Activated B cell treated with CpG ODN at 0.5 μM for 24 hours (primary cell): ENCODE measurements at regions of chr11 and their contacts with region 1.

Region 1: DNA sequence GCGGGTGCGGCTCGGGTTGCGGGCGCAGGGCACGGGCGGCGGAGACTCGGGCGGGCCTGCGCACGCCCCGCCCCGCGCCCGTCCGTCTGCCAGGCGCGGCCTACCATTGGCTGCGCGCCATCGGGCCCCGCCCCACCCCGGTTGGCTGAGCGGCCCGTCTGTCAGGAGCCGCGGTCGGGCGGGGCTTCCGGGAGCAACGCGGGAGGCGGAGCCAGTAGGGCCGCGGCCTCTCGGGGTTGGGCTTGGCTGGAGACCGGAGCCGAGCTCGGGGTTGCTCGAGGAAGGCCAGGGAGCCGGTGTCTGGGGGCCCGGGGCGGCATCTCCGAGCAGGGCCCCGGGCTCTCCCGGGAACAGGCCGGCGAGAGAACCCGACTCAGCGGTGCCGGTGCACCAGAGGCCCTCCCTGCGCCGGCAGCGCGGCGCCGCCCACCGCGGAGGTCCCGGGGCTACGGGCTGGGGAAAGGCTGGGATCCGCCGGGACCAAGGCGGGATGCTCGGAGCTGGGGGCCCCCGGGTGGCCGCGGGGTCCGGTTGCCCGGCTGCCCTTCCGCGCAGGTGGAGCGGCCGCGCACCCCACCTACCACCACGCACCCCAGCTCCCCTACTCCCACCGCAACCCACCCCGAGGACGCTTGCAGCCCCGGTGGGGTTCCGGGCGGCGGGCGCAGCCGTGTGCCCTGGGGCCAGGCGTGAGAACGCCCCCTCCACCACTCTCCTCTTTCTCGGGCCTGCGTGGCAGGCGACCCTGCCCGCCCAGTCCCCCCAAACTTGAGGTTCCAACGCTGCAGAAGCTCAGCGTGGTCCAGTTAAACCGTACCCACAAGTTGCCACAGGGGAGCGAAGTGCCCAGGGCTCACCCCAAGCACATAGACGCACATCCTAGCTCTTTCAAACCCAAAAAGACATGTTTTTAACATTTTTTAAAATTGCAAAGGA is at the start of gene HRAS:
- DNase-seq: peak; percentile 98
- ATAC-seq: peak; percentile 78
- H3K4me3 Mint-ChIP-seq: peak within 1 kb of the TSS; percentile 90
- H3K27ac Mint-ChIP-seq: peak within 1 kb of the TSS; percentile 96
- H3K4me1 Mint-ChIP-seq: peaks cover 26% of the 10 kb centered on the region
- H3K27me3 Mint-ChIP-seq: no peaks in the 10 kb centered on the region
- CTCF ChIP-seq: no peak
- total RNA-seq, gene HRAS: 37.2 and 43.9 TPM in 2 replicates

Region 2: DNA sequence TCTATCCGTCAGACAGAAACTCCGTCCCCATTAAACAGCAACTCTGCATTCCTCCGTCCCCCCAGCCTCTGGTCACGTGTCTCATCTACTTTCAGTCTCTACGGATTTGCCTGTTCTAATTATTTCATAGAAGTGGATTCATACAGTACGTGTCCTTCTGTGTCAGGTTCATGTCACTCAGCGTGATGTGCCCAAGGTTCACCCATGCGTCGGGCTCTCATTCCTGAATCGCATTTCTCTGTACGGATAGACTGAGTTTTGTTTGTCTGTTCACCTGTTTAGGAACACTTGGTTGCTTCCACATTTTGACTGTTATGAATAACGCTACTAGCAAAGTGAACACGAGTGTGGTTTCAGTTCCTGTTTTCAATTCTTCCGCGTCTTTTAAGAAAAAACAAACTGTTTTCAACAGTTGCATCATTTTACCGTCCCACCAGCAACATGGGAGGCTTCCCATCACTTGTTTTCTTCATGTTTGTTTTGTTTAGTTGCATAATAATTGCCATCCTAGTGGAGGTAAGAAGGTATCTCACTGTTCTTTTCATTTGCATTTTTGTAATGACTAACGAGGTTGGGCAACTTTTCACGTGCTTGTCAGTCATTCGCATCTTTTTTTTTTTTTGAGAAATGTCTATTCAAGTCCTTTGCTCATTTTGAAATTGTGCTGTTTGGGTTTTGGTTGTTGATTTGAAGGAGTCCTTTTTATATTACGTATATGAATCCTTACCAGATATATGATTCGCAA is 266.5 kb before region 1 on chr11:
- CTCF ChIA-PET with region 1: no interaction called
- POLR2A ChIA-PET with region 1: no interaction called
- intact Hi-C with region 1: loop called (anchors 2 kb)
- DNase-seq: peak; percentile 54
- ATAC-seq: peak; percentile 71
- H3K4me3 Mint-ChIP-seq: peak overlapping the region; percentile 90
- H3K27ac Mint-ChIP-seq: peak overlapping the region; percentile 99
- H3K4me1 Mint-ChIP-seq: peaks cover 40% of the 10 kb centered on the region
- H3K27me3 Mint-ChIP-seq: no peaks in the 10 kb centered on the region
- CTCF ChIP-seq: no peak

Region 3: DNA sequence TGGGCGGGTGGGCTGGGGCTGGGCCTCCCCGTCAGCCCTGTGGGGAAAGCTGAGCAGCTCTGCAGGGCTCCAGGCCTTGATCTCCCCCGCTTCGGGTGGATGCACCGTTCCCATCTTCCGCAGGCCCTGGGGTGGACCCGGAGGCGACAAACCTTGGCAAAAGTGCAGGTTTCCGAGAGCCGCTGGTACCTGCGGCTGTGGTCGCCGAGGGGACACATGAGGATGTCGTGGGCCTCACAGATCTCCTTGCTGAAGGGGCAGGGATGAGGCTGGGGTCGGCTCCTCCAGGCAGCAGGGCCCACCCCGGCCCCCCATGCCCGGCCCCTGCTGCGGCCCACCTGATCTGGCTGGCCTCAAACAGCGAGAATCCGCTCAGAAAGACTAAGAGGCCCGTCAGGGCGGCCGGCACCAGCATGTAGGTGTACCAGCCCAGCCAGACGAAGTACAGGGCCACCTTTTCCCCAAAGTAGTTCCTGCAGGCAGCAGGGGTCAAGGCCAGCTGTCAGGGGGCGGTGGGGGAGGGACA is 105.8 kb before region 1 on chr11:
- CTCF ChIA-PET with region 1: no interaction called
- POLR2A ChIA-PET with region 1: no interaction called
- intact Hi-C with region 1: no loop called
- DNase-seq: no peak
- ATAC-seq: no peak
- H3K4me3 Mint-ChIP-seq: no peak overlapping the region
- H3K27ac Mint-ChIP-seq: no peak overlapping the region
- H3K4me1 Mint-ChIP-seq: no peaks in the 10 kb centered on the region
- H3K27me3 Mint-ChIP-seq: no peaks in the 10 kb centered on the region
- CTCF ChIP-seq: no peak

Region 4: GRCh38 chr11:506238-506994 is 29.4 kb before region 1 on chr11:
- CTCF ChIA-PET with region 1: no interaction called
- POLR2A ChIA-PET with region 1: interaction called, 45 read pairs
- intact Hi-C with region 1: loop called (anchors 1 kb)
- DNase-seq: peak; percentile 98
- ATAC-seq: peak; percentile 70
- H3K4me3 Mint-ChIP-seq: peak overlapping the region; percentile 97
- H3K27ac Mint-ChIP-seq: peak overlapping the region; percentile 99
- H3K4me1 Mint-ChIP-seq: peaks cover 41% of the 10 kb centered on the region
- H3K27me3 Mint-ChIP-seq: no peaks in the 10 kb centered on the region
- CTCF ChIP-seq: no peak

Region 5: GRCh38 chr11:560305-561147 is 24.7 kb after region 1 on chr11 and contains the starts of genes LMNTD2 and RASSF7:
- CTCF ChIA-PET with region 1: no interaction called
- POLR2A ChIA-PET with region 1: interaction called, 22 read pairs
- intact Hi-C with region 1: loop called (anchors 1 kb)
- DNase-seq: peak; percentile 97
- ATAC-seq: peak; percentile 96
- H3K4me3 Mint-ChIP-seq: peak within 1 kb of the TSS; percentile 84
- H3K27ac Mint-ChIP-seq: peak within 1 kb of the TSS; percentile 59
- H3K4me1 Mint-ChIP-seq: peaks cover 17% of the 10 kb centered on the region
- H3K27me3 Mint-ChIP-seq: no peaks in the 10 kb centered on the region
- CTCF ChIP-seq: no peak
- total RNA-seq, gene LMNTD2: 8.6 and 9.1 TPM in 2 replicates
- total RNA-seq, gene RASSF7: 14.2 and 14.9 TPM in 2 replicates

Region 6: DNA sequence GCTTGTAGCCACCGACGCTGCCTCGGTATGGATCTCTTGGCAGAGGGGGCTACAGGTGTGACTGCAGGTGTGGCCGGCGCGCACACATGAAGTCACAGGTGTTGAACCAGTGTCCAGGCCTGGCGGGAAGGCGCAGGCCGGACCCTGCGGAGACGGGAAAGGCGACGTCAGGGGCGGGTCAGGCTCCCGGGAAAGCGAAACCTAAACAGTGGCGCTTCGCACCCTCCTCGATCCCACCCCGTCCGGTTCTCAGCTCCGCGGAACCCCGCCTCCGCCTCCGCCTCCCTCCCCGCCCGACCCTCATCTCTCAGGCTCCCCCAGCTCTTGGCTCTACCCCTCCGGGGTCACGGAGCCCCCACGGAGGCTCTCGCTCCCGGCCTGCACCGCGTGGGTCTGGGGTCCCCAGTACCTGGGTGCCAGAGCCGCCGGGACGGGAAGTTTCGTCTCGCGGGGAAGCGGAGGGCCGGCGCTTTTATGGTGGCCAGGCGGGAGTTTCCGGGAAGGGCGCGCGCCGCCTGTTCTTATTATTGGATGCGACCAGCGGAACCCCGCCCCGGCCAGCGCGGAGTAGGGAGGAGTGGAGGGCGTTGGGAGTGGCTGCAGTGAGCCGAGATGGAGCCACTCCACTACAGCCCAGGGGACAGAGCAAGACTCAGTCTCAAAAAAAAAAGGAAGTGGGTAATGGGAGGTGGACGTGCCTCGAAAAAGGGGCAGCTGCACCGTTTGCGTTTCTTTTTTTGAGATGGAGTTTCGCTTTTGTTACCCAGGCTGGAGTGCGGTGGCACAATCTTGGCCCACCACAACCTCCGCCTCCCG is 79.9 kb after region 1 on chr11 and contains the start of gene IRF7:
- CTCF ChIA-PET with region 1: no interaction called
- POLR2A ChIA-PET with region 1: interaction called, 27 read pairs
- intact Hi-C with region 1: no loop called
- DNase-seq: peak; percentile 92
- ATAC-seq: peak; percentile 95
- H3K4me3 Mint-ChIP-seq: peak within 1 kb of the TSS; percentile 90
- H3K27ac Mint-ChIP-seq: peak within 1 kb of the TSS; percentile 88
- H3K4me1 Mint-ChIP-seq: peaks cover 25% of the 10 kb centered on the region
- H3K27me3 Mint-ChIP-seq: no peaks in the 10 kb centered on the region
- CTCF ChIP-seq: no peak
- total RNA-seq, gene IRF7: 74.1 and 75.5 TPM in 2 replicates

Region 7: DNA sequence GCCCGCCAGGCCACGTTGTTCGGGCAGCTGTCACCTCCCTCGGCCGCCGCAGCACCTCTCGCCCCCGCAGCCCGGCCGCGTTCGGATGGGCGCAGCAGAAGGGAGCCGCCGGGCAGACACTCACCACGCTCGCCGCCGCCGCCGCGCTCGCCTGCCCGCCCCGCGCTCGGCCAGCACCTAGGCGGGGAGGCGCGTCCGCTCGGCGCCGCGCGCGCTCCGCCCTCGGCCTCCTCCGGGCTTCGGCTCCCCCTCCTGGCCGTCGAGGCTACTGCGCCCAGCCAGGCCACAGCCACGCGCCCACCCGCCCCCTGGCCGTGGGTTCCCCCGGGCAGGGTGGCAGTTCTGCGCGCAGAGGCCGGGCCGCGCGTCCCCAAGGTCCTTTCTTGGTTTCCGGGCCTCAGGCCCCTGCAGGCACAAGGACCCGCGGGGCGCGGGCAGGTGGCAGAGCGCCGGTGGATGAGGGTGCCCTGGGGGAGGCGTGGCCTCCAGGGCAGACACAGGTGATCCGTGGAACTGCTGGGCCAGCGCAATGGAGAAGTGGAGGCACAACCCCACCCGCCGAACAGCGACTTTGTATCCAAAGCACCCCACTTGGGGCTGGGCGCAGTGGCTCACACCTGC is 262.4 kb after region 1 on chr11 and contains the start of gene SLC25A22:
- CTCF ChIA-PET with region 1: no interaction called
- POLR2A ChIA-PET with region 1: interaction called, 10 read pairs
- intact Hi-C with region 1: loop called (anchors 2 kb)
- DNase-seq: peak; percentile 95
- ATAC-seq: peak; percentile 77
- H3K4me3 Mint-ChIP-seq: peak within 1 kb of the TSS; percentile 93
- H3K27ac Mint-ChIP-seq: peak within 1 kb of the TSS; percentile 86
- H3K4me1 Mint-ChIP-seq: peaks cover 22% of the 10 kb centered on the region
- H3K27me3 Mint-ChIP-seq: no peaks in the 10 kb centered on the region
- CTCF ChIP-seq: peak; percentile 21
- total RNA-seq, gene SLC25A22: 30.1 and 35.4 TPM in 2 replicates

Region 8: DNA sequence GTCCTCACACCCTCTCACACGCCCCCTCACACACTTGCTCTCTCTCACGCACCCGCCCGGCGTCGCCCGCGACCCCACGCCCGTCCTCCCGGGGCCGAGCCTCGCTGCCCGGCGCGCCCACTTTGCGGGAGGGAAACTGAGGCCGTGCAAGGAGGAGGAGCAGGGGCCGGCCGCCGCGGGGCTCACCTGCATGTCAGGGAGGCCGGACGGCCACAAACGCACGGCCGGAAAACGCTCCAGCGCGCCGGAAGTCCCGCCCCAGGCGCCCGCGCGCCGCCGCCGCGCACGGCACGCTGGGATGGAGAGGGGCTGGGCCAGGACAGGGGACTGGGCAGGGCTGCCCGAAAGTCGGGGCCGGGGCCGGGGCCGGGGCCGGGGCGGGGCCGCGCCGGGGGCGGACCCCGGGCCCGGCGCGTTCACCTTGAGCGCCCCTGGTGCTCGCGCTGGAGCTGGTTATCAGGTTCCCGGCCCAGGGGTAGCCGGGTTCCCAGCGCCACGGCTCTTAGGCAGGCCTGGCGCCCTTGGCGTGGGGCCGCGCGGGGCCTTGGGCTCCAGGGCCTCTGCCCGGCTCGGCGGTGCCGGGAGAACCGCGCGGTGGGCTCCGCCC is 374.9 kb after region 1 on chr11 and contains the start of gene CHID1:
- CTCF ChIA-PET with region 1: no interaction called
- POLR2A ChIA-PET with region 1: no interaction called
- intact Hi-C with region 1: loop called (anchors 10 kb)
- DNase-seq: peak; percentile 91
- ATAC-seq: peak; percentile 95
- H3K4me3 Mint-ChIP-seq: peak within 1 kb of the TSS; percentile 90
- H3K27ac Mint-ChIP-seq: peak within 1 kb of the TSS; percentile 72
- H3K4me1 Mint-ChIP-seq: peaks cover 31% of the 10 kb centered on the region
- H3K27me3 Mint-ChIP-seq: no peaks in the 10 kb centered on the region
- CTCF ChIP-seq: no peak
- total RNA-seq, gene CHID1: 43.9 and 45.7 TPM in 2 replicates

Region 9: DNA sequence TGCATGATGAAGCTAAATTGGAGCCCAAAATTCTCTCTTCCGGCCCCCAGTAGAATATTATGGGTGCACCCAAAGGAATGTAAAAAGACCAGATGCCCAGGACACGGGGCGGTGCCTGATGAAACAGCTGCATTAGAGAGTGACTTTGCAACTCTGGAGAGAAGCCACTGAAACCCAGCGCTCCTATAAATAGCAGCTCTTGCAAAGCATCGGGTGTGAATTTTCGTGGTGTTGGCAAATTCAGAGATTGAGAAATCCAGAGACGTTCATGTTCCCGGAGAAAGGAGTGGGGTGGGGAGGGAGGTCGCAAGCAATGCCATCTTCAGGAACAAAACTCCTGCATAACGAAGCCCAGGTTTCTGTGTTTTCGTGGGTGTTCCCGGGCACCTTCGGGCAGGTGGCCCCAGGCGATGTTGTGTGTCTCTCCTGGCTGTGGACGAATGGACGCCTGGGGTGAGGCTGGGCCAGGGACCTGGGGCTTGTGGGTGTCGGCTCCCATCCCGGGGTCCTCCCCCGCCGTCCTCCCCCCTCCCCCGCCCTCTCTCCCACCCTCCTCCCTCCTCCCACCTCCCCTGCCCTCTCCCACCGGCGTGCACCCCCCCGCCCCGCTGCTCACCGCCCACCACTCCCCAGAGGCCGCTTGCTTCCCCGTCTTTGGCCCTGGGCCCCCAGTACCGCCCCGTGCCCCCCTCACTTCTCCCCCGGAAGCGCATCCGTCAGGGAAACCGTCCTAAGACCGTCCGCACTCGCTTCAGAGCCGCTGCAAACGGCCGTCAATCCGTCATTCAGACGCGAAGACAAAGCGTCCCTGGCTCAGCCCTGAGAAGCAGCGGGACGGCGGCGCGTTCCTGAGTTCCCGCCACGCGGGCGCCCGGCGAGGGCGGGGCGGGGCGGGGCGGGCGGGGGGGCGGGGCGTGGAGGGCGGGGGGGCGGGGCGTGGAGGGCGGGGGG is 800.3 kb after region 1 on chr11:
- CTCF ChIA-PET with region 1: no interaction called
- POLR2A ChIA-PET with region 1: no interaction called
- intact Hi-C with region 1: no loop called
- DNase-seq: peak; percentile 41
- ATAC-seq: peak; percentile 60
- H3K4me3 Mint-ChIP-seq: peak overlapping the region; percentile 82
- H3K27ac Mint-ChIP-seq: peak overlapping the region; percentile 57
- H3K4me1 Mint-ChIP-seq: peaks cover 18% of the 10 kb centered on the region
- H3K27me3 Mint-ChIP-seq: no peaks in the 10 kb centered on the region
- CTCF ChIP-seq: no peak